Activated T-helper 1 cell treated with anti-CD3 and anti-CD28 coated beads, Interleukin-12 subunit alpha, Interleukin-12 subunit beta, Interleukin-2, Interleukin-4 antibody, amounts not matched to agents 30 ng/mL and 10 ng/mL and 1 ng/mL, durations not matched to agents 14 hours and 24 hours and 36 hours (primary cell): ENCODE measurements at regions of chr2 and their contacts with region 1.

Region 1: DNA sequence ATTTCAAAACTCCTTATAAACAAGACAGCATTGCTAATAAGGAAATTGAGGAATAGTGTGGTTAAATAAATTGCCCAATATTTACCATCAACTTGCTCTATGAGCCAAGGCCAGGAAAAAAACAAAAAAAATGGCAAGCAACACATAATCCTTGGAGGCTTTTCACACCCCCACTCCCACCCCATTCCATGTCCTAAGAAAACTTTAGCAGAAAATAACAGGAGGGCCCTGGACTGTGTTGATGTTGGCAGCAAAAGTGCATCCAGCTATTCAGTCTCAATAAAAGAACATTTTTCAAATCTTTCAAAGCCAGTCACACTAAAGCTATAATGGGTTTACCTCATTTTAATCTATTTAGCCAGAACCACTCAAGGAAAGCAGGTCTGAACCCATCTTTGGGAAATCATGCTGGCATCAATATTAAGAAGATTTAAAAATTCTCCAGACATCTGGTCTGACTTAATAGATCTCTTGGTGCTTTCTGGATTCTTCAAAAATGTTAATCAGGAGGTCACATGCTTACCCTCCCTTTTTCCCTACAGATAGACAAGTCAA is 34.6 kb upstream of the STK17B start:
- DNase-seq: no peak
- H3K4me3 Mint-ChIP-seq: no peak overlapping the region
- H3K27ac Mint-ChIP-seq: no peak overlapping the region
- H3K4me1 Mint-ChIP-seq: peaks cover 46% of the 10 kb centered on the region
- H3K27me3 Mint-ChIP-seq: no peaks in the 10 kb centered on the region

Region 2: DNA sequence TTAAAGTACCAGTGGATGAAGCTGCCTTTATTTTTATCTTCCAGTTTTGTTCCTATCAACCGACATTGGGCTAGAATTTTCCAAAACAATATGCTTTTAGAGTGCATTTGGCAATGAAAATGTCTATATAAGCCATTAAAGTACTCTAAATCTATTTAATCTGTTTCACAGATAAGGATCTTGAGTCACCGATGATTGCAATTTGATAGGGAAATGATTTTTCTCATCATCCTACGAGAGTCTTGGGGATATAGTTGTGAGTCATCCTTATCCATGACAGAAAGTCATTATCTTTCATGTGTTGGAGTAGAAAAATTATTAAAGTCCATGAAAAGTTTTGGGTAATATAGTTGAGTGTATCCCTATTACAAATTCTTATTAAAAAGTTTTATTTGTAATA is 522.8 kb before region 1 on chr2:
- intact Hi-C with region 1: no loop called
- DNase-seq: no peak
- H3K4me3 Mint-ChIP-seq: no peak overlapping the region
- H3K27ac Mint-ChIP-seq: no peak overlapping the region
- H3K4me1 Mint-ChIP-seq: peaks cover 25% of the 10 kb centered on the region
- H3K27me3 Mint-ChIP-seq: no peaks in the 10 kb centered on the region

Region 3: DNA sequence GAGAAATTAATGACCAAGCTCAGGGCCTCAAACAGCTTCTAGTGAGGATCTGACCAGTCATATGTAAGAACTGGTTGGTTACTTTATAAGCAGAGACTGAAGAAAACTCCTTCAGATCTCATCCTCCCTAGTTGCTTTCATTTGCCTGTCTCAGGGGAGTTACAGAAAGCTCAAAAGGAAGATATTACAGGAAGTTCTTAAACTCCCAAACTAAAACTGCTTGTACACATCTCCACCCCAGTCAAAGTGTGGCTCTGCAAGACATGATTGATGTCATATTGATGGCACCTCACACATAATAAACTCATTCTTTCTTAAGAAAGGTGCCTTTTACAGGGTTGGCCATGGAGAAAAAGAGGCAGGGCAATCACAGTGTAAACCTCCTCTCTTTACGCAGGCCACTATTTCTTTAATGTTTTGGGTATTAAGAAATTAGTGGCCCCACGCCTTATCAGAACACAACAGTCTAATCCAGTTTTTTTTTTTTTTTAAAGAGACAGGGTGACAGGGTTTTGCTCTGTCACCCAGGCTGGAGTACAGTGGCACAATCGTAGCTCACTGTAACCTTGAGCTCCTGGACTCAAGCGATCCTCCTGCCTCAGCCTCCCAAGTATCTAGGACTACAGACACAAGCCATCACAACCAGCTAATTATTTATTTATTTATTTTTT is 28.0 kb after region 1 on chr2:
- intact Hi-C with region 1: loop called (anchors 1 kb)
- DNase-seq: no peak
- H3K4me3 Mint-ChIP-seq: peak overlapping the region; percentile 35
- H3K27ac Mint-ChIP-seq: peak overlapping the region; percentile 83
- H3K4me1 Mint-ChIP-seq: peaks cover 93% of the 10 kb centered on the region
- H3K27me3 Mint-ChIP-seq: no peaks in the 10 kb centered on the region

Region 4: DNA sequence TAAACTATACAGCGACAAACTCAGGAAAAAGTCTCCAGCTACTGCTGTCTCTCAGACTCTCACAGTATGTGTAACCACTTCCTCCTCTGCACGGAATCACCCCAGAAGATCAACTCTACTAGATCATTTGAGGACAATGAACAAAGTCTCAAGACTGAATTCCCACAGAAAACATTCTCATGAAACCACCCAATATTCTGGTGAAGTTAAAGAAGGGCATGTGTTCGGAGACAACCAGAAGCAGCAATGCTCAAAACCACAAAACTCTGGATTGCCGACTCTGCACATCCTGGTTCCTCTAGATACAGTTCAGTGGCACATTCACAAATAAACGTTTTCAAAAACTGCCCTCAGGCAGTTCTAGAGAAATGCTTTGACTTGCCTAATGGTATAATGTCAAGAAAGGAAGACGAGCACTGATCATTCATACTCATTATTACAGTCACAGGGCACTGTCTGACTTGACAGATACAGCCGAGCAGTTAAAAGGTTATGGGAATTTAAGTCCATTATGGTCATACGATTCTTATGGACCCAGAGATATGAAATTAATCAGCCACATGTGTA is 57.3 kb after region 1 on chr2:
- intact Hi-C with region 1: loop called (anchors 1 kb)
- DNase-seq: peak; percentile 57
- H3K4me3 Mint-ChIP-seq: peak overlapping the region; percentile 65
- H3K27ac Mint-ChIP-seq: peak overlapping the region; percentile 88
- H3K4me1 Mint-ChIP-seq: peaks cover 79% of the 10 kb centered on the region
- H3K27me3 Mint-ChIP-seq: no peaks in the 10 kb centered on the region

Region 5: DNA sequence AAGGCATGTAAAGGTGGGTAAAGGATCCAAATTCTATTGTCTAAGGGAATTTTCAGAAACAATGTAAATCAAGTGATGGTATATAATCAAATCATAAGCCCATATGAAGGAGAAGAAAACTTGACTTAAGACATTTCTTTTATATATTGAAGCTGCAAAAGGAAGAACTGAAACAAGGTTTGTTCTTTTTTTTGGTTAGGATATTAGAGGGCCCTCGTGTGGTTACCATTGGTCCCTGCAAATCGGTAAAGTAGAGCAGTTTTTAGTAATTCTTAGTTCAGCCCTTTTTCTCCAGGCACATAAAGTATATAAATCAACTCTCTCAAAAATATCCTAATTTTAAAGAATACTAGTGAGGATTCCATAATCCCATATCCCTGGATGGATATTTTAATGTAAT is 71.0 kb after region 1 on chr2:
- intact Hi-C with region 1: loop called (anchors 1 kb)
- DNase-seq: no peak
- H3K4me3 Mint-ChIP-seq: no peak overlapping the region
- H3K27ac Mint-ChIP-seq: no peak overlapping the region
- H3K4me1 Mint-ChIP-seq: peaks cover 44% of the 10 kb centered on the region
- H3K27me3 Mint-ChIP-seq: no peaks in the 10 kb centered on the region

Region 6: DNA sequence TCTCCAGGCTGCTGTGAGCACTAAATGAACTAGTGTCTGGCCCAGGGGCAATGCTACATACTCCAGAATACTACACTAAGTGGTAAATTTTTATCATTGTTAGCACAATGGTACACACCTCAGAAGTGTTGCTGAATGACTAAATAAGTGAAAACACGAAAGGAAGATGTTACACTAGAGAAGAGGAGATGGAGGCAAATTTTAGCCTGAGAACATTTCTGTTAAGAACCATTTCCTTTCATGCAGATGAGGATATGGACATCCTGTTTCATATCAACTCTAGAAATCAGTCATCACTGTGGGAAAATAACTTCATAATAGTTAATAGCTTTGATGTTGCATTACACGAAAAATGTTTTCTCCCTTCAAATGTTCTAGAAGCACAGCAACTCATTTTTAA is 83.0 kb after region 1 on chr2:
- intact Hi-C with region 1: no loop called
- DNase-seq: no peak
- H3K4me3 Mint-ChIP-seq: peak overlapping the region; percentile 12
- H3K27ac Mint-ChIP-seq: peak overlapping the region; percentile 38
- H3K4me1 Mint-ChIP-seq: peaks cover 64% of the 10 kb centered on the region
- H3K27me3 Mint-ChIP-seq: peaks cover 2% of the 10 kb centered on the region